ENCODE measurements at regions of chr3 and their contacts with region 1.

Region 1: DNA sequence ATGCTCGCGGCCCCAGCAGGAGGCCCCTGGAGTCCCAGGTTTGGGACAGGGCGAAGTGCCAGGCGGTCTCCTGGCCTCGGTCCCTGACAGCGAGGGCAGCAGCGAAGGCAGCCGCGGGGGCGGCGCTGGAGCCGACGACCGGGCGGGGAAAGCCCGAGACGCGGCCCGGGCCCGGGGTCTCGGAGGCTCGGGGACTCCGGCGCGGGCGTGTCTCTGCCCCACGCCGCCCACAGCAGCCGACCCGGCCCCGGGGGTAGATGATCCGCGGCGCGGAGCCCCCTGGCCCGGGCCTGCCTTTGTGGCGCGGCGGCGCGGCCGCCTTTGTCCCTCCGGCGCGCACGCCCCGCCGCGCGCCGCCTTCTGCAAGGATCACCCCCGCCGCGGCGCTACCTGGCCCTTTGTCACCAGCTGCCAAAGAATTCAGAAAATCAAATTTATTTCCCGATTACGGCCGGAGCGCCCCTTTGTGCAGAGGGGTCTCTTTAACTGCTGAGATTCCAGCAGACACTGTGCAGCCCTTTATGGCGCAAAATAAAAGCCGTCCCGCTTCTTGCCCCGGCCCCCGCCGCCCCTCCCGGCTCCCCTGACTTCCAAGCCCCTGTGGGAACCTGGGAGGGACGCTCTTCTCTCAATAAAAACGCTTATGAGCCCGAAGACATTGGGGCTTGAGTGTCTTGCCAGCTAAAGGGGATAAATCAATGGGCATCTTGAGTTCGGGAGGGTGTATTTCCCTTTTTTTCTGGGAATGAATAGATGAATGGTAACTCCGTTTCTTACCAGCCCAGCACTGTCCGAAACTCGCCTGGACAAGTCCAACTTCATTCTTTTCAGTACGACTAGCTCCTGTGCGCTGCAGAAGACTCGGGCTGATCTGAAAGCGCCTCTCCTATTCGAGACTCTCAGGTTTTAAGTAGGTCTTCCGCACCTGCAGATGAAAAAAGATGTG is 68.4 kb downstream of the HES1 start:
- DNase-seq: peak; percentile 5
- H3K4me3 Mint-ChIP-seq: peak overlapping the region; percentile 81
- H3K27ac Mint-ChIP-seq: peak overlapping the region; percentile 69
- H3K4me1 Mint-ChIP-seq: peaks cover 34% of the 10 kb centered on the region
- H3K27me3 Mint-ChIP-seq: peaks cover 8% of the 10 kb centered on the region

Region 2: DNA sequence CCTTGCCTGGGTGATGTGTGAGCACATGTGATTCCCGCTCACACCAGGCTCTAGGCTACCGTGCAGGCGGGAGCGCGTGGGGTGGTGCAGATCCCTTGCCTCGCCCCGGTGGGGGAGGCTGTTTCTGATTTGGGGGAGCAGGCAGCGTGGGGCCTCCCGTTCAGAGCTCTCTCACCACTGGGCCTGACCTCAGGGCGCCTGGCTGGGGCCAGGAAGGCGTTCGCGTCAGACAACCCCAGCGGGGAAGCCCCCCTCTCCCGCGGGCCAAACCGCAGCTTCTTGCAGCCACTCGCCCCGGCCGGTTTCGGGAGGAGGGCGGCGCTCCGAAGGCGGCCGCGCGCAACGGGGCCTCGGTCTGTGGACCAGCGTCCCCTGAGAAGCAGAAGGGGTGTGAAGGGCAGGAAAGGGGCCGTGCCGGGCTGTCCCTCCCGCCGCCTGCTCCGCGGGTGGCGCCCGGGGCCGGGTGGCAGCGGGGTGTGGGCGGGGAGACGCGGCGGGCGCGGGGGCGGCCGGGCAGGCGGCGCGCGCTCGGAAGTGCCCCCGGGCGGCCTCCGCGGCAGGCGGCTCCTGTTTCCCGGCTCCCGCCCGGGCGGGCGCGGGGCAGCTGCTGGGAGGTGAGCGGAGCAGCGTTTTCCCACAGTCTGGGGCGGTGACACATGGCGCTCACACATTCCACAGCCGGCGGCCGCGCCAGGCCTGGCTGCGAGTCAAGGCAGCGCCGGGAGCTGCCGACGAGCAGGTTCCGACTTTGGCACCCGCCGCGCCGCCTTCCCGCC is 133.5 kb before region 1 on chr3:
- intact Hi-C with region 1: loop called (anchors 5 kb)
- DNase-seq: peak; percentile 65
- H3K4me3 Mint-ChIP-seq: peak overlapping the region; percentile 46
- H3K27ac Mint-ChIP-seq: no peak overlapping the region
- H3K4me1 Mint-ChIP-seq: peaks cover 38% of the 10 kb centered on the region
- H3K27me3 Mint-ChIP-seq: peaks cover 60% of the 10 kb centered on the region

Region 3: DNA sequence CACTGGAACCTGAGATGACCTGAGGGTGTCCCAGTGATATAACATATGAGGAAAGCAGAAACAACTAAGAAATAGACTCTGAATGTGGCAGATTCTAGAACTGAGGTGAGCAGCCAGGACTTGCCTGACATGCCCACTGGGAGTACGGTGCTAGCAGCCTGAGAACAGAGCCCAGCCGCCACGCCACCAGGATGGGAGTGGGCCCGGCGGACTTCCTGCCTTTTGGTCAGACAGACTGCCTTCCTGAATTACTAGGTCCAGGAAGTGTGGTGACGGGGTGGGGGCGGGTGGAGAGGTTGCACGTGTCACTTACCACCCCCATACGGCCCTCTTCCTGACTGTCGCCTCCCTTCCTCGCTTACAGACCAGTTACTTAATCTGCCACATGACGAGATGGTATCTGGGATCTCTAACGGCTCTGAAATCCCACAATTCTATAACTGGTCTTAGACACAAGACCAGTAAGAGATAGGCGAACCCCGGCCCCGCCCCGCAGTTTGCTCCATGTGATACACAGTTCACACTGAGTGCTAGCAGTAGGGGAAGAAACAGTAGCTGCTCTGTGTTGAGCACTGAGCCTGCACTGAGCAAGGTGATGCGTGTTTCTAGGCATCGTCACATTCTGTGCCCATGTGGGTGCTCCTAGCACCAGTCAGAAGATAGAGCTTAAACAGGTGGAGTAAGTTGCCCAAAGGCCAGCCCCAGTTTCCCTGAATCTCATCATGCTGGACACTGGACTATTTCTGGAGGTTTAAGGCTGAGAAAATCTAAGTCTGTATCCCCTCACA is 51.1 kb after region 1 on chr3:
- intact Hi-C with region 1: loop called (anchors 5 kb)
- DNase-seq: peak; percentile 13
- H3K4me3 Mint-ChIP-seq: peak overlapping the region; percentile 48
- H3K27ac Mint-ChIP-seq: peak overlapping the region; percentile 81
- H3K4me1 Mint-ChIP-seq: peaks cover 30% of the 10 kb centered on the region
- H3K27me3 Mint-ChIP-seq: peaks cover 2% of the 10 kb centered on the region

Region 4: GRCh38 chr3:194315088-194315964 is 111.0 kb after region 1 on chr3:
- intact Hi-C with region 1: loop called (anchors 2 kb)
- DNase-seq: peak; percentile 79
- H3K4me3 Mint-ChIP-seq: peak overlapping the region; percentile 83
- H3K27ac Mint-ChIP-seq: no peak overlapping the region
- H3K4me1 Mint-ChIP-seq: peaks cover 43% of the 10 kb centered on the region
- H3K27me3 Mint-ChIP-seq: peaks cover 7% of the 10 kb centered on the region

Region 5: DNA sequence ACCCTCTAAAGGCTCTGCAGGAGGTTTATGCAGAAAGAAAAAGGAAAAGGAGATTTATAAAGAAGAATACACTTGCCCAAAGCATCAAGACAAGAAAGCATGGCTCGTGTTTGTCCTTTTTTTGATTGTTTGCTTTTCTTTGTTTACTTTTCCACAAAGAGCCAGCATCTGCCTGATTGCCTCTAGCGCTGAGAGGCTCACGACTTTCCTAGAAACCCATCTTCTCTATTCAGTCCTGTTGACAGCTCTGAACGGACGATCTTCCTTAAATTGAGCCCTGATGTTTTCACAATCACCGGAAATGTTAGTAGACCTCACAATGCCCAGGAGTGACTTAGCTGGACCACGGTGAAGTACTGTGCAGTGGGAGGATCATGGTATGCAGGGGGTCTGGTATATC is 182.3 kb after region 1 on chr3:
- intact Hi-C with region 1: no loop called
- DNase-seq: no peak
- H3K4me3 Mint-ChIP-seq: no peak overlapping the region
- H3K27ac Mint-ChIP-seq: no peak overlapping the region
- H3K4me1 Mint-ChIP-seq: peaks cover 4% of the 10 kb centered on the region
- H3K27me3 Mint-ChIP-seq: peaks cover 25% of the 10 kb centered on the region

Measured in activated T-helper 1 cell treated with anti-CD3 and anti-CD28 coated beads, Interleukin-12 subunit alpha, Interleukin-12 subunit beta, Interleukin-2, Interleukin-4 antibody, amounts not matched to agents 30 ng/mL and 10 ng/mL and 1 ng/mL, durations not matched to agents 14 hours and 24 hours and 36 hours (primary cell).